ENCODE measurements at regions of chr14 and their contacts with region 1.

Region 1: GRCh38 chr14:63713765-63714164 is 14.1 kb downstream of the SGPP1 start:
- DNase-seq: no peak
- H3K4me3 Mint-ChIP-seq: no peak overlapping the region
- H3K27ac Mint-ChIP-seq: no peak overlapping the region
- H3K4me1 Mint-ChIP-seq: peaks cover 20% of the 10 kb centered on the region
- H3K27me3 Mint-ChIP-seq: no peaks in the 10 kb centered on the region

Region 2: GRCh38 chr14:63555572-63555971 is 158.2 kb before region 1 on chr14:
- CTCF ChIA-PET with region 1: no interaction called
- POLR2A ChIA-PET with region 1: no interaction called
- intact Hi-C with region 1: loop called (anchors 5 kb)
- DNase-seq: peak; percentile 47
- H3K4me3 Mint-ChIP-seq: no peak overlapping the region
- H3K27ac Mint-ChIP-seq: peak overlapping the region; percentile 49
- H3K4me1 Mint-ChIP-seq: peaks cover 14% of the 10 kb centered on the region
- H3K27me3 Mint-ChIP-seq: peaks cover 2% of the 10 kb centered on the region

Region 3: DNA sequence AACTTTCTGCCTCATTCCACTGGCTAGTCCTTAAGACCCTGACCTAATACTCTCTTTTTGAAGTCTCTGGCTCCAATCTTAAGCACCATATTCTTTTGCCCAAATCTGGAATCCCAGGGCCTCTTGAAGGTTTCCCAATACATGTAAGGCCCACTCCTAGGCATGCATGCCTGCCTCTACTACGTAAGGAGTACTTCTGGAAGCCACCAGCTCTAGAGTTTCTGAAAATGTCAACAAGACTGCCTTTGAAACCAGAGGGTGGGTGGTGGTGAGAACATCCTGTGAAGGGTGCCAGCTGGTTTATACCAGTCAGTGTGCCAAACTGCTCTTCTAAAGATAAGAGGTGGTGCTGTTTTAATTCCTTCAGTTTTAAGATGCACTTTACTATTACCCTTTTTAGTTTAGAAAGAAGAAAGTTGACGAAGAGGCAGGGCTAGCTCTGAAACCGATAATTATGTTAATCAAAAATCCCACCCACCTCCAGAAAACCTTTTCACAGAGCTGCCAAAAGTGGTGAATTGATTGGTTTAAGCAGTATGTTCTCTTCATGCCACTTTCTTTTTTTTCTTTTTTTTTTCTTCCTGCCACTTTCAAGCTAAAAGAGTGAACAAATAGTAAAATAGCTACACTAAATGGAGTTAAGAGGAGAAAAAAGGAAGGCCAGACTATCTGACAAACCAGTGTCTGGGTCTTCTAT is 63.4 kb before region 1 on chr14:
- CTCF ChIA-PET with region 1: interaction called, 3 read pairs
- POLR2A ChIA-PET with region 1: no interaction called
- intact Hi-C with region 1: loop called (anchors 2 kb)
- DNase-seq: peak; percentile 75
- H3K4me3 Mint-ChIP-seq: peak overlapping the region; percentile 46
- H3K27ac Mint-ChIP-seq: peak overlapping the region; percentile 93
- H3K4me1 Mint-ChIP-seq: peaks cover 40% of the 10 kb centered on the region
- H3K27me3 Mint-ChIP-seq: no peaks in the 10 kb centered on the region

Measured in activated CD4-positive, alpha-beta memory T cell treated with anti-CD3 and anti-CD28 coated beads for 36 hours (primary cell).